Dendritic cell treated with granulocyte-macrophage colony-stimulating factor and Interleukin-4, amounts not matched to agents 40 ng/mL and 50 ng/mL, for 4 days (primary cell): ENCODE measurements at regions of chr7 and their contacts with region 1.

Region 1: DNA sequence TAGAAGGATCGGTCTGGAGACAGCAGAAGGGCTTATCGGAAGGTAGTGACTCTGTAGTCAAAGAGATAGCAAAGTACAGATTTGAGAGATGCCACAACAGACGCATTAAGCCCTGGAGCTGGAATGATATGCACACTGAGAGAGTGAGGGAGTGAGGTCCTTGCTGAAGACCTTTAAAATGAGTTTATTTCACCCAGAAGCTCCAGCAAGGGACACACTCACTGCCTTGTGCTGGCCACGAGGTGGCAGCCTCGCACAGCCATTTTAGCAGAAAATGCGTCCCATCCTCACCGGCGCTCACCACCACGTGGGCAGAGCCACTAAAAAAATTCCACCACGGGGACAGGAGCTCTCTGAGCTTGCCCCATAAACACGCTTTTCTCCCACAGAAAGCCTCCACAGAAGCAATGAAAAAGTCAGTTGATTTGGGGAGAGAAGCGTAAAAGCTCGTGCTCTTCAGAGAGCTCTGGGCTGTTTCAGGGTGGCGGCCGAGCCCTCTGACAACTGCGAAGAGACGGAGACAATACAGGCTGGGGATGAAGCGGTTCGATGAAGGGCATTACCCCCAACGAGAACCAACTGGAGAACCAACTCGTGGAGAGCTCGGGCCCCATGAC is 163.0 kb upstream of the KLF14 start:
- H3K4me3 Mint-ChIP-seq: no peak overlapping the region
- H3K27ac Mint-ChIP-seq: peak overlapping the region; percentile 27
- H3K4me1 Mint-ChIP-seq: peaks cover 71% of the 10 kb centered on the region
- H3K27me3 Mint-ChIP-seq: no peaks in the 10 kb centered on the region

Region 2: GRCh38 chr7:130943336-130943901 is 46.4 kb after region 1 on chr7:
- intact Hi-C with region 1: loop called (anchors 5 kb)
- H3K4me3 Mint-ChIP-seq: peak overlapping the region; percentile 60
- H3K27ac Mint-ChIP-seq: peak overlapping the region; percentile 72
- H3K4me1 Mint-ChIP-seq: peaks cover 63% of the 10 kb centered on the region
- H3K27me3 Mint-ChIP-seq: no peaks in the 10 kb centered on the region

Region 3: GRCh38 chr7:130982160-130982638 is 85.2 kb after region 1 on chr7:
- intact Hi-C with region 1: loop called (anchors 1 kb)
- H3K4me3 Mint-ChIP-seq: no peak overlapping the region
- H3K27ac Mint-ChIP-seq: no peak overlapping the region
- H3K4me1 Mint-ChIP-seq: peaks cover 10% of the 10 kb centered on the region
- H3K27me3 Mint-ChIP-seq: no peaks in the 10 kb centered on the region

Region 4: DNA sequence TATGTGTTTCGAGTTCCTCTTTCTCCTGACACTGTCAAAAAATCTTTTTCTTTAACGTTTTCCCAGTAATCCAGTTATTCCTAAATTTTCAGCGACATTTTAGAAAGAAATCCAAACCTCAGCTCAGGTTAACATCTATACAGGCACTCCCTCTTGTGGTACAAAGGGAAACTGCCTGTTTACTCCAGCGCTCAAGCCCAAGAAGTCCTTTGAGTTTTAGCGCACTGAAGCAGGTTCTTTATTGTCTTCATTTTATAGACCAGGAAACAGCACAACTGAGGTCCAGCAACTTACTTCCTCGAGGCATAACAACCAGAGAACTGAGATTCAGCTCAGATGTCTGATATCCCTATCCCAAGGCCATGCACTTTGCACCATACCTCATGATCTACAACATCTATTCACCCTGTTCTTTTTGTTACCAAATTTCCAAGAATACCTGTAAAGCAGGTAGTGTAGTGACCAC is 143.5 kb after region 1 on chr7:
- intact Hi-C with region 1: loop called (anchors 2 kb)
- H3K4me3 Mint-ChIP-seq: peak overlapping the region; percentile 46
- H3K27ac Mint-ChIP-seq: no peak overlapping the region
- H3K4me1 Mint-ChIP-seq: peaks cover 29% of the 10 kb centered on the region
- H3K27me3 Mint-ChIP-seq: no peaks in the 10 kb centered on the region